Heart left ventricle (tissue), 16 donors: ENCODE measurements at regions of chr17 and their contacts with region 1.

Region 1: GRCh38 chr17:71900621-71901229 is 220.1 kb upstream of the SOX9 start:
- DNase-seq: no peak
- ATAC-seq: no peak
- H3K4me3 ChIP-seq: no peak overlapping the region
- H3K27ac ChIP-seq: no peak overlapping the region
- H3K4me1 ChIP-seq: peaks cover 0 to 15% (median 0%) of the 10 kb centered on the region in 12 donors
- H3K27me3 ChIP-seq: no peaks in the 10 kb centered on the region
- CTCF ChIP-seq: no peak
- POLR2A ChIP-seq: no peak

Region 2: GRCh38 chr17:71830866-71831265 is 69.9 kb before region 1 on chr17:
- intact Hi-C with region 1: loop called in 1 of 10 experiments (anchors 10 kb)
- DNase-seq: no peak
- ATAC-seq: no peak
- H3K4me3 ChIP-seq: no peak overlapping the region
- H3K27ac ChIP-seq: no peak overlapping the region
- H3K4me1 ChIP-seq: peaks cover 0 to 4% (median 0%) of the 10 kb centered on the region in 12 donors
- H3K27me3 ChIP-seq: peaks cover 0 to 16% (median 0%) of the 10 kb centered on the region in 9 donors
- CTCF ChIP-seq: no peak
- POLR2A ChIP-seq: no peak

Region 3: GRCh38 chr17:71959154-71959553 is 58.4 kb after region 1 on chr17:
- intact Hi-C with region 1: loop called in 1 of 10 experiments (anchors 10 kb)
- DNase-seq: no peak
- ATAC-seq: no peak
- H3K4me3 ChIP-seq: no peak overlapping the region
- H3K27ac ChIP-seq: no peak overlapping the region
- H3K4me1 ChIP-seq: peaks cover 0 to 4% (median 0%) of the 10 kb centered on the region in 12 donors
- H3K27me3 ChIP-seq: no peaks in the 10 kb centered on the region
- CTCF ChIP-seq: peak in 11 of 12 donors; percentile 12 to 50 (median 25)
- POLR2A ChIP-seq: no peak